ENCODE measurements at regions of chr9 and their contacts with region 1.

Region 1: GRCh38 chr9:114869845-114870244 is 60.5 kb downstream of the TNFSF8 start:
- DNase-seq: no peak
- H3K4me3 ChIP-seq: no peak overlapping the region
- H3K4me3 Mint-ChIP-seq: no peak overlapping the region
- H3K27ac ChIP-seq: no peak overlapping the region
- H3K27ac Mint-ChIP-seq: no peak overlapping the region
- H3K4me1 ChIP-seq: peaks cover 3 to 10% of the 10 kb centered on the region in 2 donors
- H3K4me1 Mint-ChIP-seq: peaks cover 10% of the 10 kb centered on the region
- H3K27me3 ChIP-seq: no peaks in the 10 kb centered on the region
- H3K27me3 Mint-ChIP-seq: peaks cover 0 to 5% (median 1%) of the 10 kb centered on the region in 3 donors
- CTCF ChIP-seq: no peak

Region 2: GRCh38 chr9:114824110-114824509 is 45.7 kb before region 1 on chr9:
- intact Hi-C with region 1: loop called in 1 of 2 experiments (anchors 10 kb)
- DNase-seq: no peak
- H3K4me3 ChIP-seq: no peak overlapping the region
- H3K4me3 Mint-ChIP-seq: no peak overlapping the region
- H3K27ac ChIP-seq: no peak overlapping the region
- H3K27ac Mint-ChIP-seq: no peak overlapping the region
- H3K4me1 ChIP-seq: peaks cover 6 to 18% of the 10 kb centered on the region in 2 donors
- H3K4me1 Mint-ChIP-seq: peaks cover 8% of the 10 kb centered on the region
- H3K27me3 ChIP-seq: no peaks in the 10 kb centered on the region
- H3K27me3 Mint-ChIP-seq: peaks cover 3 to 7% (median 3%) of the 10 kb centered on the region in 3 donors
- CTCF ChIP-seq: no peak